PC-9 (cell line): ENCODE measurements at regions of chr13 and their contacts with region 1.

Region 1: GRCh38 chr13:36275190-36276002 is 22.2 kb downstream of the CCDC169 start:
- DNase-seq: peak in 1 of 2 experiments; percentile 48
- H3K4me3 ChIP-seq: no peak overlapping the region
- H3K27ac ChIP-seq: no peak overlapping the region
- H3K4me1 ChIP-seq: no peaks in the 10 kb centered on the region
- H3K27me3 ChIP-seq: no peaks in the 10 kb centered on the region
- CTCF ChIP-seq: peak; percentile 80

Region 2: GRCh38 chr13:35978603-35979316 is 296.6 kb before region 1 on chr13:
- CTCF ChIA-PET with region 1: no interaction called
- POLR2A ChIA-PET with region 1: no interaction called
- intact Hi-C with region 1: loop called (anchors 1 kb)
- DNase-seq: peak; percentile 17 to 52
- H3K4me3 ChIP-seq: no peak overlapping the region
- H3K27ac ChIP-seq: no peak overlapping the region
- H3K4me1 ChIP-seq: no peaks in the 10 kb centered on the region
- H3K27me3 ChIP-seq: no peaks in the 10 kb centered on the region
- CTCF ChIP-seq: peak; percentile 94

Region 3: DNA sequence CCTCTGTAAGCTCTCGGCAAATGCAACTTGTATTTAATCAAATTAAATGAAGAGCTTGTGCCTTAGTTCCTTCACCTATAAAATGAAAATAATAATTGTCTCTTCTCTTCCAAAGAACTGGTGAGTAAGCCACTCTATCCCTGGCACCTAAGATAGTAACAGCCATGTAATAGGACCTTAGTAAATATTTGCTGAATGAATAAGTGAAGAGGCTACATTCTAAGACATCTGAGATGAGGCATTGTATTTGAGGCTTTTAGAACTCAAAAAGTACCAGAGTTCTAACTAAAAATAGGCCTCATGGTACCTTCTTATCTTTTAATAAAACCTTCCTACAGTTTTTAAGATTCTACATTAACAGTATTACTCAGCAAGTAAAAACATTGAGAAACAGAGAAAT is 127.0 kb before region 1 on chr13:
- CTCF ChIA-PET with region 1: no interaction called
- POLR2A ChIA-PET with region 1: no interaction called
- intact Hi-C with region 1: no loop called
- DNase-seq: no peak
- H3K4me3 ChIP-seq: no peak overlapping the region
- H3K27ac ChIP-seq: no peak overlapping the region
- H3K4me1 ChIP-seq: no peaks in the 10 kb centered on the region; the same call in 1 of the 2 replicates
- H3K27me3 ChIP-seq: no peaks in the 10 kb centered on the region
- CTCF ChIP-seq: no peak